ENCODE measurements at regions of chr16 and their contacts with region 1.

Region 1: GRCh38 chr16:75053791-75054555 is 55.1 kb downstream of the ZNRF1 start:
- DNase-seq: peak; percentile 63 to 83 (median 78)
- ATAC-seq: peak in 3 of 4 donors; percentile 58 to 78 (median 74)
- H3K4me3 ChIP-seq: no peak overlapping the region
- H3K27ac ChIP-seq: peak overlapping the region in 11 of 12 donors; percentile 13 to 77 (median 53)
- H3K4me1 ChIP-seq: peaks cover 6 to 52% (median 28%) of the 10 kb centered on the region in 12 donors
- H3K27me3 ChIP-seq: no peaks in the 10 kb centered on the region
- CTCF ChIP-seq: no peak
- POLR2A ChIP-seq: no peak

Region 2: DNA sequence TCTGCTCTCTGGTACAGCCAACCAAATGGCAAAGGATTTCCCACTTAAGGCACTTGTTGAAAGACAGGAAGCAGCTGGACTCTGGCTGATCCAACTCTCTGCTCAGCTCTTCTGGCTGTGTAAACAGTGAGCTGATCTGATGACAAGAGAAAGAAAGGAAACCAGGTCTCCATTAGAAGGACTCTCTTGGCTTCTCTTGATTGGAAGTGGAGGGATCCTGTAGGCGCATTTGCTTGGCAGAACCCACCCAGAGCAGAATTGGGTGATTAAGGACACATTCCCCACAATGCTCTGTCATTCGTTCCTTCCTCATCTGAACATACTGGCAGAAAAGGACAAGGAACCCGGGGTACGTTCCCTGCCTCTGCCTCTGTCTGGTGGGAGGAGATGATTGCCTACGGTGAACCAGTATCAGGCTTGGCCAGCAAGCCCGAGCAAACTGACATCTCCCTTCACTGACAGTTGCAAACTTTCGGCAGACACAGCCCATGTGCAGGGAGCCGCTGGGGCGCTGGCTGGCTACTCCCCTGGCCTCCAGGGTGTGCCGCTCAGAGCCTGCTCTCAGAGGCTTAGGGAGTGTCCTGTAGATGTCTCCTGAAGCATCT is 33.5 kb after region 1 on chr16:
- intact Hi-C with region 1: loop called in 1 of 10 experiments (anchors 5 kb)
- DNase-seq: peak; percentile 55 to 71 (median 60)
- ATAC-seq: peak; percentile 86 to 93 (median 90)
- H3K4me3 ChIP-seq: peak overlapping the region in 8 of 12 donors; percentile 8 to 32 (median 23)
- H3K27ac ChIP-seq: peak overlapping the region; percentile 25 to 78 (median 68)
- H3K4me1 ChIP-seq: peaks cover 5 to 46% (median 31%) of the 10 kb centered on the region in 12 donors
- H3K27me3 ChIP-seq: no peaks in the 10 kb centered on the region
- CTCF ChIP-seq: peak in 3 of 12 donors; percentile 10 to 16 (median 12)
- POLR2A ChIP-seq: no peak

Region 3: DNA sequence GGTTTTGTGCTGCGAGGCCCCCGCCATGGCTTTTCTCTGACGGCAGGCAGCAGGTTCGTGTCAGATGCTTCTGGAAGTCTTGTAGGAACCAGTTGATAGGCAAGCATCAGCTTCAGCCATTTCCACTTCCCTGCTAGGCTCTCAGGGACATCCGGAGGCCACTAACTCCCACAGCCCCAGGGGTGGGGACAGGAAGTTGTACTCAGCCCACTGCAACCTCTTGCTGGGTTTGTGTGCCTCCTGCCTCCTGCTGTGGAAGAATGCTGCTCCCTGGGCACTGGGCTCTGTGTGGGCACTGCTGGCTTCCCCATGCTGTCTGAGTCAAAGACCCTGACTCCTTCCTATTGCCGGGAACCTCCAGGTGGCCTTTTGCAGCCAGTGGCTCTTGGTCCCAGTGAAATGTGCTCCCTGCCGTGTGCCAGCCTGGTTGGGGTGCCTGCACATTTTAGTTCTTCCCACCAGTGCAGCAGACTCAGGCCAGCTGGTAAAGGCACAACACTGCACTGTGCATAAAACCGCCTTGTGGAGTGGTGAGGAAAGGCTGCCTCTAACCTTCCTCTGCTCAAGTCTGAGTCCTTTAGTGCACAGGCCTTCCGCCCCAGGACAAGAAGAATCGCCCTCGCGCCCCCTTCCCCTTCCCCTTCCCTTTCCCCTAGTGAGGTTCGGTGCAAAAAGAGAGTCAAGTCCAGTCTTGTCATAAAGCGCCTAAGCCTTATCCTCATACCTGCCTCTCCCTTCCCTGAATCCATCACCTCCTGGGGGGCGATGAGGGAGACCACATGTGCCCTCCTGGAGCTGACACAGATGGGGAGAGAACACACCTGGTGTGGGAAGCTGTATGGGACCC is 46.0 kb after region 1 on chr16:
- intact Hi-C with region 1: loop called in 4 of 10 experiments (anchors 5 to 10 kb)
- DNase-seq: peak; percentile 59 to 74 (median 68)
- ATAC-seq: peak; percentile 43 to 86 (median 68)
- H3K4me3 ChIP-seq: no peak overlapping the region
- H3K27ac ChIP-seq: peak overlapping the region; percentile 20 to 81 (median 70)
- H3K4me1 ChIP-seq: peaks cover 7 to 44% (median 38%) of the 10 kb centered on the region in 12 donors
- H3K27me3 ChIP-seq: no peaks in the 10 kb centered on the region
- CTCF ChIP-seq: peak in 3 of 12 donors; percentile 8 to 35 (median 19)
- POLR2A ChIP-seq: no peak

Measured in heart left ventricle (tissue), 16 donors.